ENCODE measurements at regions of chrX and their contacts with region 1.

Region 1: GRCh38 chrX:129793604-129794191 is 13.9 kb downstream of the SASH3 start:
- DNase-seq: no peak
- H3K4me3 Mint-ChIP-seq: no peak overlapping the region
- H3K27ac Mint-ChIP-seq: no peak overlapping the region
- H3K4me1 Mint-ChIP-seq: peaks cover 34% of the 10 kb centered on the region
- H3K27me3 Mint-ChIP-seq: no peaks in the 10 kb centered on the region

Region 2: DNA sequence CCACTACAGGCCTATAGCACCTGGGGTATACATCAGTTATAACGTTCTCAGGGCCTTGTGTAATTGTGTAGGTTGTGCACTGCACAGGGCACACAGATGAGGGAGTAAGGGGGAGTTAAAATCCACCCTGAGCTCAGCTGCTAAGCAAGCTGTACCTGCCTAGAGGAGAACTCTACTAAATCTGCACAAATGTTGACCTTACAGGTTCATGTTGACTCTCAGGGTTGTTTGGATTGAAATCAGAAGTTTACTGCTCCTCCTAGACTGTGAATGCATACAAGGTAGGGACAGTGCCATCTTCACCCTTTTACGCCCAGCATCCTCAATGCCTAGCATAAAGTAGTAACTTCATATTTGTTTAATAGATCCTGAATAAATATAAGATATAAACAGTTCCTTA is 360.2 kb before region 1 on chrX:
- CTCF ChIA-PET with region 1: no interaction called
- POLR2A ChIA-PET with region 1: no interaction called
- DNase-seq: no peak
- H3K4me3 Mint-ChIP-seq: no peak overlapping the region
- H3K27ac Mint-ChIP-seq: no peak overlapping the region
- H3K4me1 Mint-ChIP-seq: no peaks in the 10 kb centered on the region
- H3K27me3 Mint-ChIP-seq: peaks cover 2% of the 10 kb centered on the region

Region 3: DNA sequence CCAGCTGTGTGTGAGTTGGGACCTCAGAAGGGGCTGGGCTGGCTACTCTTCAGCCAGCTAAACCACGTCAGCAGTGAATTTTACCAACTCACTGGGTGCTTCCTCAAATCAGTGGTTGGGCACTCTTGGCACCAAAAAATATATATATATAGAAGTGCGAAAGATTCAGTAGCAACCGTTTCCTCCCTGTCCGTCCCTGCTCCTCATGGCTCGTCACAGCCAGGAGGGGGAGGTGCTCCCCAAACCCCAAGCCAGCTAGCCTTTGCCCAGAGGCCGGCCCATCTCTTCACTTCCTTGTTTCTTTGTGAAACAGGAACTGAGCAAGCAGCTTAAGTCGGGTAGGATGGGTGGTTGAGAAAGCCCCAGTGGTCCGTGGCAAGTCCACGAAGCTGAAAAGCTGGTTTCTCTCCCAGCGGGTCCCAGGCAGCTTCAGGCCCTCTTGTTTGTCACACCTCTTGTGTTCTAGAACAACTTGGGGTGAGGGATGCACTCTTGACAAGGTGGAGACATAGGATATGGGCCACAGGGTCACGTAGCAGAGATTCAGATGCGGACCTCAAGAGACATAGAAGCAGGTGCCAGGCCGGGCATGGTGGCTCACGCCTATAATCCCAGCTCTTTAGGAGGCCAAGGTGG is 20.8 kb before region 1 on chrX:
- CTCF ChIA-PET with region 1: interaction called, 3 read pairs
- POLR2A ChIA-PET with region 1: interaction called, 229 read pairs
- DNase-seq: peak; percentile 58
- H3K4me3 Mint-ChIP-seq: peak overlapping the region; percentile 58
- H3K27ac Mint-ChIP-seq: peak overlapping the region; percentile 95
- H3K4me1 Mint-ChIP-seq: peaks cover 86% of the 10 kb centered on the region
- H3K27me3 Mint-ChIP-seq: no peaks in the 10 kb centered on the region

Region 4: GRCh38 chrX:129808829-129809796 is 15.4 kb after region 1 on chrX:
- CTCF ChIA-PET with region 1: no interaction called
- POLR2A ChIA-PET with region 1: interaction called, 16 read pairs
- DNase-seq: no peak
- H3K4me3 Mint-ChIP-seq: no peak overlapping the region
- H3K27ac Mint-ChIP-seq: peak overlapping the region; percentile 35
- H3K4me1 Mint-ChIP-seq: peaks cover 18% of the 10 kb centered on the region
- H3K27me3 Mint-ChIP-seq: no peaks in the 10 kb centered on the region